Activated naive CD4-positive, alpha-beta T cell treated with anti-CD3 and anti-CD28 coated beads for 36 hours (primary cell): ENCODE measurements at regions of chr6 and their contacts with region 1.

Region 1: DNA sequence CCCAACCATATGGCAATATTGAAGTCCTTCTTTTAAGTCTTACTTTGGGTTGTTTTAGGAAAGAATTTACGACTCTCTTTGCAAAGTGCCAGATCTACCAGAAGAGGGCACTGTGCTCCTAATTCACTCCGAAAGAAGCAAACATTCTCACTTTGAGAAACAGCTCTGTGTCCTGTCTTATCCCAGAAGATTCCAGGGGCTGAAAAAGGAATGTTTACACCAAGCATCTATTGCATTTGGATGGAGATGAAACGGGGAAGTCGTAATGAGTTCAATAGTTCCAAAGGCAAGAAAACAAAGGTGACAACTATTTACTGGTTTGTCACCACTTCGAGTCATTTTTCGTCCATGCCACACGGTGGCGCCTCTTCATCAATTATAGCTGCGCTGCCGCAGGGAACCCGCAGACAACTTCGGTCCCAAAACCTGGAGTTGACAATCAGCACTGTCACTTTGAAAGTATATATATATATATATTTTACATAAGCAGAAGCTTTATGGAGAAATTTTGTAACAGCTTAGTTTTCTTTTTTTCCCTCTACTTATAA is 121.6 kb downstream of the MOXD1 start:
- DNase-seq: peak; percentile 78
- H3K4me3 Mint-ChIP-seq: peak overlapping the region; percentile 64
- H3K27ac Mint-ChIP-seq: no peak overlapping the region
- H3K4me1 Mint-ChIP-seq: no peaks in the 10 kb centered on the region
- H3K27me3 Mint-ChIP-seq: peaks cover 14% of the 10 kb centered on the region

Region 2: GRCh38 chr6:131660195-131660594 is 619.5 kb before region 1 on chr6:
- CTCF ChIA-PET with region 1: no interaction called
- intact Hi-C with region 1: no loop called
- DNase-seq: no peak
- H3K4me3 Mint-ChIP-seq: no peak overlapping the region
- H3K27ac Mint-ChIP-seq: no peak overlapping the region
- H3K4me1 Mint-ChIP-seq: no peaks in the 10 kb centered on the region
- H3K27me3 Mint-ChIP-seq: no peaks in the 10 kb centered on the region

Region 3: GRCh38 chr6:132167929-132168892 is 111.5 kb before region 1 on chr6:
- CTCF ChIA-PET with region 1: no interaction called
- intact Hi-C with region 1: no loop called
- DNase-seq: no peak
- H3K4me3 Mint-ChIP-seq: no peak overlapping the region
- H3K27ac Mint-ChIP-seq: no peak overlapping the region
- H3K4me1 Mint-ChIP-seq: no peaks in the 10 kb centered on the region
- H3K27me3 Mint-ChIP-seq: no peaks in the 10 kb centered on the region

Region 4: DNA sequence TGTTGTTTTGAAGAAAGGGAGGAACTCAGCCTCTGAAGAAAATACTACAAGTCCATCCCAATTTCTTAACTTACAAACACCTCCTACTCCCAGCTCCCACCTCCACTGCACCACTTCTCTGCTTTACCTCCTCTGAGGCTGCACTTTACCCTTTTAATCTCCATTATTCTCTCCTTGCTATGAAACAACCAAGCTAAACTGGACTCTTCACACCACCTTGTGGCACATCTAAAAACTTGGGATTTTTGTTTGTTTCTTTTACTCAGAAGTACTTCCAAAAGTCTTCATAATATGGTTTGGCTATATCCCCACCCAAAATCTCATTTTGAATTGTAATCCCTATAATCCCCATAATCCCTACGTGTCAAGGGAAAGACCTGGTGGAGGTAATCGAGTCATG is 20.6 kb before region 1 on chr6:
- CTCF ChIA-PET with region 1: interaction called, 20 read pairs
- intact Hi-C with region 1: no loop called
- DNase-seq: no peak
- H3K4me3 Mint-ChIP-seq: no peak overlapping the region
- H3K27ac Mint-ChIP-seq: no peak overlapping the region
- H3K4me1 Mint-ChIP-seq: no peaks in the 10 kb centered on the region
- H3K27me3 Mint-ChIP-seq: peaks cover 25% of the 10 kb centered on the region

Region 5: GRCh38 chr6:132300323-132300949 is 20.8 kb after region 1 on chr6:
- CTCF ChIA-PET with region 1: interaction called, 83 read pairs
- intact Hi-C with region 1: loop called (anchors 1 kb)
- DNase-seq: peak; percentile 43
- H3K4me3 Mint-ChIP-seq: no peak overlapping the region
- H3K27ac Mint-ChIP-seq: no peak overlapping the region
- H3K4me1 Mint-ChIP-seq: no peaks in the 10 kb centered on the region
- H3K27me3 Mint-ChIP-seq: peaks cover 26% of the 10 kb centered on the region

Region 6: GRCh38 chr6:132465530-132466485 is 186.1 kb after region 1 on chr6:
- CTCF ChIA-PET with region 1: interaction called, 16 read pairs
- intact Hi-C with region 1: no loop called
- DNase-seq: no peak
- H3K4me3 Mint-ChIP-seq: no peak overlapping the region
- H3K27ac Mint-ChIP-seq: no peak overlapping the region
- H3K4me1 Mint-ChIP-seq: no peaks in the 10 kb centered on the region
- H3K27me3 Mint-ChIP-seq: no peaks in the 10 kb centered on the region

Region 7: DNA sequence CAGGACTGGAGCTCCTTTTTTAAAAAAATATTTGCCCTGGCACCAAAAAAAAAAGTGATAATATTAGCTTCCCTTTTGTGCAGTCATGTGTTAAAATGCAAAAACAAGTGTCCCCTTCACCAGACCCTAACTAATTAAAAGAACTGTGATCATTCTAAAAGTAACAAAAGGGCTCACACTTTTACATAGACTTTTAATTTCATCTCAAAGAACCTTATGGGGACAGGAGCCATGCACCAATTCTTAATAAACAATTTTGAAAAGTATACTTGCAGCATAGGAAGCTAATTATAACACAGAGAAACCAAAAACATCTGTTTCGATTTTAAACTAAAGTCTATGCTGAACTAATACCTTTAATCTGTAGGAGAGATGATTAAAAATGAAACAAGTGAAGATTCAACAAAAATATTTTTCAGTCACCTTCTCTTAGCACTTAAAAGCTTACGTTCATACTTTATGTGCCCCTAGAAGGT is 216.0 kb after region 1 on chr6:
- CTCF ChIA-PET with region 1: interaction called, 11 read pairs
- intact Hi-C with region 1: no loop called
- DNase-seq: no peak
- H3K4me3 Mint-ChIP-seq: no peak overlapping the region
- H3K27ac Mint-ChIP-seq: no peak overlapping the region
- H3K4me1 Mint-ChIP-seq: peaks cover 44% of the 10 kb centered on the region
- H3K27me3 Mint-ChIP-seq: no peaks in the 10 kb centered on the region

Region 8: DNA sequence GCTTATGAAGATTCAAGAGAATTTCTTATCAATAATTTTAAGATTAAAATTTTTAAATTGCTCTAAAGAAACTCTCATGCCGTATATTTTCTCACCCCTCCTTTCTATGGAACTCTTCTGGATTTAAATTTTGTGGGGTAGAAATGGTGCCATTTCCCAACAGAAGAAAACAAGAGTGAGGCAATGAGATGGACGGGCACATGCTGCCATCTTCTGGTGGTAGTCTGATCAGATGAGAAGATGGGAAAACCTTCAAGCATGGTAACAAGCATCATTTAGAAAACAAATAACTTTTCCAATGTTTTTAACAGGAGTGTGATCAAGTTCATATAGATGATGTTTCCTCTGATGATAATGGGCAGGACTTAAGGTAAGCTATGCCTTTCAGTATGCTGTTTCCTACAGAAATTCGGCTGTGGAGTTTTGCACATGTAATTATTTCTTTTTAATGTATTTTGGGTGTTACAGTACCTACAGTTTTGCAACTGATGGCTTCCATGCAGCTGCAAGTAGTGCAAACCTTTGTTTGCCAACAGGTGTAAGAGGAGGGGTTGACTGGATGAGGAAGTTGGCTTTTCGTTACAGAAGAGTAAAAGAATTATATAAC is 1232.8 kb after region 1 on chr6:
- CTCF ChIA-PET with region 1: no interaction called
- intact Hi-C with region 1: loop called (anchors 5 kb)
- DNase-seq: peak; percentile 58
- H3K4me3 Mint-ChIP-seq: no peak overlapping the region
- H3K27ac Mint-ChIP-seq: no peak overlapping the region
- H3K4me1 Mint-ChIP-seq: no peaks in the 10 kb centered on the region
- H3K27me3 Mint-ChIP-seq: peaks cover 15% of the 10 kb centered on the region